Activated CD8-positive, alpha-beta T cell treated with anti-CD3 and anti-CD28 coated beads, Interleukin-2, amount 10 ng/mL, durations not matched to agents 7 days and 5 days (primary cell): ENCODE measurements at regions of chr15 and their contacts with region 1.

Region 1: GRCh38 chr15:76973362-76973743 is 21.6 kb upstream of the PSTPIP1 start:
- DNase-seq: peak; percentile 81
- ATAC-seq: peak; percentile 61
- H3K4me3 Mint-ChIP-seq: no peak overlapping the region
- H3K27ac Mint-ChIP-seq: peak overlapping the region; percentile 61
- H3K4me1 Mint-ChIP-seq: peaks cover 37% of the 10 kb centered on the region
- H3K27me3 Mint-ChIP-seq: no peaks in the 10 kb centered on the region

Region 2: DNA sequence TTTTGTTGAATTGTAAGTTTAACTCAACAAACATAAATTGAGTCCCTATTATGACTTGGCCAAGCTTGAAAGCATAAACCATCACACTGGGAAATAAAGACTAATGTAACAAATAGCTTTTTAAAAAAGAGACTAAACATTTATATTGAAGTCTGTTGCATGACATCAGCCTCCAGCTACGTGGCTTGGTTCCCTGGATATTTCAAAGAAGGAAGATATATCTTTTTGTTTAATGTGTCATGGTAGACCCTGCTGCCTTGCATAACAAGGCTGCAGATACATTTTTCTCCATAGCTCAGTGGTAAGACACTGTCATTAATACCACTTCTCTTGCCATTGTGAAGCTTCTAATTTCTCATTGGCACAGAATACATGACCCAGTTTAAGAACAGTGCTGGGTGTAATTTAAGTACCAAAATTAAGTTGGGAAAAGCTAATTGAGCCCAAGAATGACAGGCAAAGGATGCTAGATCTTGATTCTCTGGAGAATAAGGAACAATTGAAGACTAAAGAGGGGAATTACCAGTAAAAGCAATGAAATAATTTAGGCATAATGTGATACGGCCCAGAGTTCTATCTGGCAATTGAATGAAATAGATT is 27.8 kb before region 1 on chr15:
- CTCF ChIA-PET with region 1: interaction called, 21 read pairs
- POLR2A ChIA-PET with region 1: no interaction called
- DNase-seq: no peak
- ATAC-seq: no peak
- H3K4me3 Mint-ChIP-seq: no peak overlapping the region
- H3K27ac Mint-ChIP-seq: no peak overlapping the region
- H3K4me1 Mint-ChIP-seq: peaks cover 1% of the 10 kb centered on the region
- H3K27me3 Mint-ChIP-seq: no peaks in the 10 kb centered on the region

Region 3: DNA sequence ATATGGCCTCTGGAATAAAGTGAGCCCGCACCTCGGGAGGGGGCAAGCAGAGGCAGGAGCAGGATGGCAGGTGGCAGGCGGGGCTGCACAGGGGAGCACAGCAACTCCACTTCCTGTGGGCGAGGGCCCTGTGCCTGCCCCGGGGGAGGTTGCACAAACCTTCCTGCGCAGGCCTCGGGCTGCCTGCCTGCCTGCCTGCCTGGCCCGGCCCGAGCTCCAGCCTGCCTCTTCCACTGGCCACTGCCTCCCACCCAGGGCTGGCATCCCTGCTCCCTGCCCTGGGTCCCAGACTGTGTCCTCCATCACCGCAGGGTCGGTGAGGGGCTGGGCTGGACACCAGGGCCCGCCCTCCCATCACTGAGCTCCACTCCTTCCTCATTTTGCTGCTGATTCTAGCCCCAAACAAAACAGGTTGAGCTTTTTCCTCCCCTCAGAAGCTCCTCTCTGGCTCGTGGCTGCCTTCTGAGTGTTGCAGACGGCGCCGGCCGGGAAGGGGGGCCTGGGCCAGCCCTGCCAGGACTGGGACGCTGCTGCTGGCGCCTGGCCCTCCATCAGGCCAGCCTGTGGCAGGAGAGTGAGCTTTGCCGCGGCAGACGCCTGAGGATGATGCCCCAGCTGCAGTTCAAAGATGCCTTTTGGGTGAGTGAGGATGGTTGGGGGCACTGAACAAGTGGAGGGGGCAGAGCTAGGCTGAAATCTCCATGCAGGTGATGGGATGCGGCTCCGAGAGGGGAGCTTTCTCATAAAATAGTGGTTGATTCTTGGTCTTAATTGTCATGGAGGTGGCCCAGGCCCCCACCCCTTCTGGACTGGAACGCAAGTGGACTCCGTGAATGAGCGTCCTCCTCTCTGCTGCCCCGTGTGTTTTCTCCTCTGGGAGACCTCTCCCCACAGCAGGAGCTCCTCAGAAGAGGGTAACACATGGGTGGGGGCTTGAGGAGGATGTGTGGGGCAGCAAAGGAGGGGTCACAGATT is 21.9 kb after region 1 on chr15 and contains the start of gene PSTPIP1:
- CTCF ChIA-PET with region 1: interaction called, 82 read pairs
- POLR2A ChIA-PET with region 1: interaction called, 5 read pairs
- DNase-seq: peak; percentile 85
- ATAC-seq: peak; percentile 81
- H3K4me3 Mint-ChIP-seq: peak within 1 kb of the TSS; percentile 96
- H3K27ac Mint-ChIP-seq: peak within 1 kb of the TSS; percentile 96
- H3K4me1 Mint-ChIP-seq: peaks cover 72% of the 10 kb centered on the region
- H3K27me3 Mint-ChIP-seq: no peaks in the 10 kb centered on the region
- total RNA-seq, gene PSTPIP1: 208 to 212 TPM

Region 4: GRCh38 chr15:77031376-77032050 is 58.2 kb after region 1 on chr15:
- CTCF ChIA-PET with region 1: interaction called, 59 read pairs
- POLR2A ChIA-PET with region 1: no interaction called
- DNase-seq: peak; percentile 76
- ATAC-seq: peak; percentile 86
- H3K4me3 Mint-ChIP-seq: no peak overlapping the region
- H3K27ac Mint-ChIP-seq: peak overlapping the region; percentile 82
- H3K4me1 Mint-ChIP-seq: peaks cover 39% of the 10 kb centered on the region
- H3K27me3 Mint-ChIP-seq: no peaks in the 10 kb centered on the region

Region 5: DNA sequence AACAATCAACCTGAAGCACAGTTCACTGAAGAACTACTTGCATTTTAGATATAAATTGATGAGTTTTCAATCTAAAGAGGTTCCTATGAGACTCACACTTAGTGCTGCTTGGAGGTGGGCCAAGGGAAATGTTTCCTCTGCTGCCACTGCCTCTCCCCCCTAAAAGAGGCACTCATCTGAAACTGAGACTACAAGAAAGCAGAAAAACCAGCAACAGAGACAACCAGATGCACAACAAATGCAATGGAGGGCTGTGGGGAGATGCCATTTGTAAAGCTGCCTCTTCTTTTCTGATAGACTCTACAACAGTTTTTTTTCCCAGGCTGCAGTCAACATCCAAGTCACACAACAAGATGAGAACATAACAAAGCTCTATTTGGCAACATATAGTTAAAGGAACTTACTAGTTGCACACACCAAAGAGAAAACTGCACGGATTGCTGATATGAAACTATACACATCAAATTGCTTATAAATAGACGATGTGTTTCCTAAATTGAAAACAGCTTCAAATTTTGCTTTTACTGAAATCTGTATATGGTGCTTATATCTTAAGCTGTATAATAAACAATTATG is 86.5 kb after region 1 on chr15:
- CTCF ChIA-PET with region 1: interaction called, 14 read pairs
- POLR2A ChIA-PET with region 1: no interaction called
- DNase-seq: no peak
- ATAC-seq: no peak
- H3K4me3 Mint-ChIP-seq: no peak overlapping the region
- H3K27ac Mint-ChIP-seq: peak overlapping the region; percentile 35
- H3K4me1 Mint-ChIP-seq: peaks cover 14% of the 10 kb centered on the region
- H3K27me3 Mint-ChIP-seq: no peaks in the 10 kb centered on the region

Region 6: GRCh38 chr15:77496710-77497103 is 523.4 kb after region 1 on chr15:
- CTCF ChIA-PET with region 1: interaction called, 14 read pairs
- POLR2A ChIA-PET with region 1: no interaction called
- DNase-seq: peak; percentile 76
- ATAC-seq: peak; percentile 86
- H3K4me3 Mint-ChIP-seq: no peak overlapping the region
- H3K27ac Mint-ChIP-seq: no peak overlapping the region
- H3K4me1 Mint-ChIP-seq: peaks cover 20% of the 10 kb centered on the region
- H3K27me3 Mint-ChIP-seq: no peaks in the 10 kb centered on the region